Activated CD4-positive, alpha-beta memory T cell treated with anti-CD3 and anti-CD28 coated beads, Interleukin-2, amount 10 ng/mL, durations not matched to agents 7 days and 5 days (primary cell): ENCODE measurements at regions of chr12 and their contacts with region 1.

Region 1: DNA sequence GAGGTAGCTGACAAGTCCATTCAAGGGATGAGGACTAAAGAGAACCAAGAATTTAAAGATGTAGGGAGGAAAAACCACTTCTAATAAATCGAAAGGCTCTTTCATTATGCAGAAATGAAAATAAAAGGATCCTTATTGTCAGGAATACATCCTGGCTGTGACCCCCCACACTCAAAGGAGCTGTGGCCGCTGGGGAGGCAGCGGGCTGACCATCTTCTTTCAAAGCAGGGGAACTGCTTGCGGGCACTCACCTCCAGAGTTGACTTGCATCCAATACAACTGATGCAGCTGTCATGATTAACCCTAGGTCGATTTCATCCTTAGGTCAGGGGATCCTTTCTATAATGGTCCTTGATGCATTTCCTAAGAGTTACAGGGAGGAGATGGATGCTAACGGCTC is 35.3 kb downstream of the TRAFD1 start:
- DNase-seq: no peak
- H3K4me3 Mint-ChIP-seq: no peak overlapping the region
- H3K27ac Mint-ChIP-seq: no peak overlapping the region
- H3K4me1 Mint-ChIP-seq: peaks cover 38% of the 10 kb centered on the region
- H3K27me3 Mint-ChIP-seq: no peaks in the 10 kb centered on the region

Region 2: GRCh38 chr12:112125250-112125999 is 35.2 kb before region 1 on chr12 and contains the start of gene TRAFD1:
- CTCF ChIA-PET with region 1: interaction called, 4 read pairs
- POLR2A ChIA-PET with region 1: interaction called, 20 read pairs
- DNase-seq: peak; percentile 99
- H3K4me3 Mint-ChIP-seq: peak within 1 kb of the TSS; percentile 89
- H3K27ac Mint-ChIP-seq: peak within 1 kb of the TSS; percentile 81
- H3K4me1 Mint-ChIP-seq: peaks cover 41% of the 10 kb centered on the region
- H3K27me3 Mint-ChIP-seq: peaks cover 3% of the 10 kb centered on the region
- total RNA-seq, gene TRAFD1: 74.8 to 75.5 TPM

Region 3: GRCh38 chr12:112130441-112130998 is 30.1 kb before region 1 on chr12:
- CTCF ChIA-PET with region 1: interaction called, 4 read pairs
- POLR2A ChIA-PET with region 1: interaction called, 20 read pairs
- DNase-seq: no peak
- H3K4me3 Mint-ChIP-seq: peak overlapping the region; percentile 70
- H3K27ac Mint-ChIP-seq: peak overlapping the region; percentile 89
- H3K4me1 Mint-ChIP-seq: peaks cover 56% of the 10 kb centered on the region
- H3K27me3 Mint-ChIP-seq: no peaks in the 10 kb centered on the region